ENCODE measurements at regions of chr6 and their contacts with region 1.

Region 1: GRCh38 chr6:43769526-43770416 is at the start of gene VEGFA:
- DNase-seq: peak; percentile 90
- H3K4me3 ChIP-seq: peak within 1 kb of the TSS; percentile 80
- H3K27ac ChIP-seq: peak within 1 kb of the TSS; percentile 65
- H3K4me1 ChIP-seq: peaks cover 30% of the 10 kb centered on the region
- CTCF ChIP-seq: peak; percentile 99
- total RNA-seq, gene VEGFA: 59.7 and 66.3 TPM in 2 replicates

Region 2: DNA sequence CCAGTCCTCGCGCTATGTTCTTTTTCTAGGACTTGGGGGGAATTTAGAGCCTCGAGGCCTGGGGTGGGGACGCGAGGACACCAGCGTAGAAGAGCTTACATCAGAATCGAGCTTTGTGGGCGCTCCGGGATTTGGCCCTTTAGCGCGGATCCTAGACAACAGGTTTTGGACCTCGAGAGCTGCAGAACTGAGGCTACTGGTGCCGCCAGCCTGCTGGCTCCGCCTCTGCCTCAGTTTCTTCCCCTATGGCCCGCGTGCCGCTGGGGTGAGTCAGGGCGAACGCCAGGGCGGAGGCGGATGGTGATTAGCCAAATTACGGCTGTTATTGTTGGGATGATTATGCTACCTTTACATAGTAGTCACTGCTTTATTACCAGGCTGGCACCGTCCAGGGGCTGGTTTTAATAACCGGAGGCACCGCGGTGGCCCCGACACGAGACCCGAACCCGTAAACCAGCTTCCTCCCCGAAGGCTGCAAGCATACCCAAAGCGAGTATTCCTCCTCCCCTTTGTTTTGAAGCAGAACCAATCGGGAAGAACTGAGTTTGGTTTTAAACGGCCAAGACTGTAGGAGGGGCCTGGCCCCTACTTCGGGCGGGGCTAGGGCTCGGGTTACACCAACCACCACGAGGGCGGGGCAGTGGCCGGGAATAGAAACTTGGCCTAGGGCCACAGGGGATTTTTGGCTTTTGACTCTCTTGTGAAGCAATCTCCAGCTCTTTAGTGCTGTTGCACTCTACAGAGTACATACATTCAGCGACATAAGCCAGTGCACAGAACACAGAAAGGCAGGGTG is 140.1 kb before region 1 on chr6:
- CTCF ChIA-PET with region 1: no interaction called
- POLR2A ChIA-PET with region 1: interaction called, 8 read pairs
- intact Hi-C with region 1: loop called (anchors 2 kb)
- DNase-seq: peak; percentile 99
- H3K4me3 ChIP-seq: peak overlapping the region; percentile 75
- H3K27ac ChIP-seq: peak overlapping the region; percentile 95
- H3K4me1 ChIP-seq: peaks cover 50% of the 10 kb centered on the region
- CTCF ChIP-seq: no peak

Region 3: GRCh38 chr6:43714311-43715055 is 55.3 kb before region 1 on chr6:
- CTCF ChIA-PET with region 1: no interaction called
- POLR2A ChIA-PET with region 1: interaction called, 8 read pairs
- intact Hi-C with region 1: loop called (anchors 2 kb)
- DNase-seq: peak; percentile 81
- H3K4me3 ChIP-seq: peak overlapping the region; percentile 49
- H3K27ac ChIP-seq: peak overlapping the region; percentile 93
- H3K4me1 ChIP-seq: peaks cover 72% of the 10 kb centered on the region
- CTCF ChIP-seq: 0 out of 2 replicates have a peak, but pooled peaks have one; percentile 5

Region 4: GRCh38 chr6:43758617-43759050 is 11.1 kb before region 1 on chr6:
- CTCF ChIA-PET with region 1: interaction called, 10 read pairs
- POLR2A ChIA-PET with region 1: interaction called, 3 read pairs
- intact Hi-C with region 1: no loop called
- DNase-seq: peak; percentile 61
- H3K4me3 ChIP-seq: no peak overlapping the region
- H3K27ac ChIP-seq: no peak overlapping the region
- H3K4me1 ChIP-seq: peaks cover 20% of the 10 kb centered on the region
- CTCF ChIP-seq: peak; percentile 92

Region 5: GRCh38 chr6:43865932-43866645 is 96.3 kb after region 1 on chr6:
- CTCF ChIA-PET with region 1: no interaction called
- POLR2A ChIA-PET with region 1: no interaction called
- intact Hi-C with region 1: no loop called
- DNase-seq: no peak
- H3K4me3 ChIP-seq: no peak overlapping the region
- H3K27ac ChIP-seq: no peak overlapping the region
- H3K4me1 ChIP-seq: no peaks in the 10 kb centered on the region
- CTCF ChIP-seq: no peak

Region 6: DNA sequence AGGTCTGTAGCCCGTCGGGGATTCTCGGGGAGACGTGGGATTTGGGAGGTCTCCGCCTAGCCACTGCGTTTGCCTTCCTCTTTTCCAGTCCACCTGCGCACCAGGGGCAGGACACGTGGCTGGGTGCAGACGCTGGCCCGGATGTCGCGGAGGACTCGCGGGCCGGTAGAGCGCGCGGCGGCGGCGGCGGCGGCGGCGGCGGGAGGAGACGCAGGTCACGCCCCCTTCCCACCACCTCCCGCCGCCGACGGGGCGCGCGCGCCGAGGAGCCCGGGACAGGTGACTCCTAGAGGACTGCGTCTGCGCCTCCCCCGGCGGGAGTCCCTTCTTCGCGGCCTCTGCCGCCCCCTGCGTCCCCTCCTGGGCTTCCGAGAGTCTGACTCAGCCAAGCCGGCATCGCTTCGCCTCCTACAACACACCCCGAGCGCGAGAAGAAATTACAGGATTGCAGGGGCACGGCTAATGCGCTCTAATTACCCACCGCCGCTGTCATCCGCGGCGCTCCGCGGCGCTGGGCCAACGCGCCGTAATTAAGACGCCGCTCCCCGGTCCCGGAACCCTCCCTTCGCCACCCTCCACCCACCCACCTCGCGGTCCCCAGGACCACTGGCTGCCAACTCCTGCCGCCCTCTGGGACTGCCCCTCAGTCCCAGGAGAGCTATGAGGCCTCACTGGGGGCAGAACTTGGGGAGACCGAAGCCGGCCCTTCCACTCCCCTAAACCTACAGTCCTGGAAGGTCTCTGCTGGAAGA is 233.0 kb after region 1 on chr6:
- CTCF ChIA-PET with region 1: no interaction called
- POLR2A ChIA-PET with region 1: no interaction called
- intact Hi-C with region 1: loop called (anchors 2 kb)
- DNase-seq: peak; percentile 15
- H3K4me3 ChIP-seq: peak overlapping the region; percentile 22
- H3K27ac ChIP-seq: no peak overlapping the region
- H3K4me1 ChIP-seq: peaks cover 15% of the 10 kb centered on the region
- CTCF ChIP-seq: no peak

Region 7: GRCh38 chr6:44221291-44221960 is 451.7 kb after region 1 on chr6:
- CTCF ChIA-PET with region 1: no interaction called
- POLR2A ChIA-PET with region 1: no interaction called
- intact Hi-C with region 1: loop called (anchors 10 kb)
- DNase-seq: peak; percentile 85
- H3K4me3 ChIP-seq: no peak overlapping the region
- H3K27ac ChIP-seq: peak overlapping the region; percentile 56
- H3K4me1 ChIP-seq: peaks cover 82% of the 10 kb centered on the region
- CTCF ChIP-seq: peak; percentile 81